B cell (primary cell): ENCODE measurements at regions of chr1 and their contacts with region 1.

Region 1: DNA sequence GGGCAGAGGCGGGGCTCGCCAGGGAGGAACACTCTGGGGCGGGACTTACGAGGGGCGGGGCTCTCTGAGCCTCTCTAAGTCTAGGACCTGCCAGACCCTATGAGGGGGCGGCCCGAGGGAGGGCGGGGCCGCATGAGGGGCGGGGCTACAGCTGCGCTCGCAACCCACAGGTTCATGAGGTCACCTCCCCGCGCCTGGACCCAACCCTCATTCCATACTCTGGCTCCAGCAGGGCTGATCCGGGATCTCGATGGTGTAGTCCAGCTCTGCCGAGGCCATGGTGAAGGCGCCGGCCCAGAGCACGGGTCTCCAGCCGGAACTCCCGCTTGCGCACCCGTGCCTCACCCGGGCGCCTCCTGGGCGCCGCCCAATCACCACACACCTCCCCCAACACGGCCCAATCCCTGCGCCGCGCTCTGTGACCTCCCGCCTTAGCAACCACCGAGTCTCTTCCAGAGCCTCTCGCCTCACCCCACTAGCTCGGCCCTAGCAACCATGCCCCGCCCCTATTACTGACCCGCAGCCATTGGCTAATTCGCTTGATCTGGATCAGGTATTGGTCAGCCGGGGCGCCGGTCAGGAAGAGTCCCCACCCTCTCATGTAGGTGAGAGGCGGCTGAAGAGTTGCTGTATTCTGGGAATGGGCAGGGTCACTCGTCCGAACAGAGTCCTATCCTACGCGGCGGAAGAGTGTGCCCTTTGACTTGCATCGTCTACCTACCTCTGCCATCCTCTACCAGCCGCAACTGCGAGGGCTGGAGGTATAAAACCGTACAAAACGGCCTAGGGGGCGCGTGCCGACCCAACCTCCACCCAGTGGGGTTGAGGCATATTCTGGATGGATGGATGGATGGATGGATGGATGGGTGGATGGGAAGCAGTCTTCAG is at the starts of genes ARMH1 and TMEM53:
- DNase-seq: peak; percentile 99
- ATAC-seq: peak; percentile 91
- H3K4me3 ChIP-seq: peak within 1 kb of the TSS; percentile 70 to 88 (median 84)
- H3K4me3 Mint-ChIP-seq: peak within 1 kb of the TSS; percentile 91
- H3K27ac ChIP-seq: peak within 1 kb of the TSS; percentile 87 to 94
- H3K27ac Mint-ChIP-seq: peak within 1 kb of the TSS; percentile 96
- H3K4me1 ChIP-seq: peaks cover 34 to 50% of the 10 kb centered on the region in 2 donors
- H3K4me1 Mint-ChIP-seq: peaks cover 35% of the 10 kb centered on the region
- H3K27me3 ChIP-seq: no peaks in the 10 kb centered on the region
- H3K27me3 Mint-ChIP-seq: no peaks in the 10 kb centered on the region
- CTCF ChIP-seq: no peak
- total RNA-seq, gene ARMH1: 10.2 and 11.4 TPM in 2 replicates
- total RNA-seq, gene TMEM53: 5.3 and 6.8 TPM in 2 replicates

Region 2: GRCh38 chr1:44213222-44214112 is 460.9 kb before region 1 on chr1 and contains the start of gene DMAP1:
- CTCF ChIA-PET with region 1: no interaction called
- POLR2A ChIA-PET with region 1: no interaction called
- intact Hi-C with region 1: loop called (anchors 1 kb)
- DNase-seq: peak; percentile 92
- ATAC-seq: peak; percentile 81
- H3K4me3 ChIP-seq: peak within 1 kb of the TSS; percentile 77 to 95 (median 84)
- H3K4me3 Mint-ChIP-seq: peak within 1 kb of the TSS; percentile 97
- H3K27ac ChIP-seq: peak within 1 kb of the TSS; percentile 45 to 53
- H3K27ac Mint-ChIP-seq: peak within 1 kb of the TSS; percentile 93
- H3K4me1 ChIP-seq: peaks cover 16 to 17% of the 10 kb centered on the region in 2 donors
- H3K4me1 Mint-ChIP-seq: peaks cover 32% of the 10 kb centered on the region
- H3K27me3 ChIP-seq: no peaks in the 10 kb centered on the region
- H3K27me3 Mint-ChIP-seq: no peaks in the 10 kb centered on the region
- CTCF ChIP-seq: no peak
- total RNA-seq, gene DMAP1: 88.5 and 95.5 TPM in 2 replicates

Region 3: DNA sequence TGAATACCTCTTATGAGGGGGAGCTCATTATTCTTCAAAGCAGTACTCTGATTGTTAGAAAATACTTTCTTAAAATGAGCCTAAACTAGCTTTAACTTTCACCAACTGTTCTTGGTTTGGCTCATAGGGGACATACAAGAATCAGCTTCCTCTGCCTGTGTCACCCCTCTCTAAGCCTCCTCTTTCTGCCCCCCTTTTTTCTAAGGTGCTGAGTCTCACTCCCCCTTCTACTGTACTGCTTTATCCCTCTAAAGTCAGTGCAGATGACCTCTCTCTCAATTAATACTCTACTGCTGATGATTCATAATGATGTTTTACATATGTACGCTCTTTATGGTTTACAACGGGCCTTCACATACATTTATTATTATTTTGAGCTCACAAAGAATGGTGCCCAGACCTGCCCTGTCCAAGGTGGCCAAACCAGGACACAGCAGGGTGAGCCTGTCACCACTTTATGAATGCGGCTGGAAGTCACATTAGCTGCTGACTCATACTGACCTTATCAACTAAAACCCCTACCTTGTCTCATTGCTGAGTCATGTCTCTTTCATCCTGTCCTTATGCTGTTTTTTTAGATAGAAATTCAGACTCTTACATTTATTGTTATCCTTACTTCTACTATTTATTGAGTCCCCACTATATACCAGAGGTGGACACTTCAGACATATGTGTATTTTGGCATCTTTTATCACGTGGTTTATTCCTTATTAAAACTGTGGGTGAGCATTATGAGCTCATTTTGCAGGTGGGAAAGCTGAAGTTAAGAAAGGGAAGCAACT is 142.4 kb before region 1 on chr1:
- CTCF ChIA-PET with region 1: no interaction called
- POLR2A ChIA-PET with region 1: no interaction called
- intact Hi-C with region 1: no loop called
- DNase-seq: no peak
- ATAC-seq: no peak
- H3K4me3 ChIP-seq: no peak overlapping the region
- H3K4me3 Mint-ChIP-seq: no peak overlapping the region
- H3K27ac ChIP-seq: no peak overlapping the region
- H3K27ac Mint-ChIP-seq: no peak overlapping the region
- H3K4me1 ChIP-seq: no peaks in the 10 kb centered on the region
- H3K4me1 Mint-ChIP-seq: no peaks in the 10 kb centered on the region
- H3K27me3 ChIP-seq: no peaks in the 10 kb centered on the region
- H3K27me3 Mint-ChIP-seq: peaks cover 19% of the 10 kb centered on the region
- CTCF ChIP-seq: no peak

Region 4: DNA sequence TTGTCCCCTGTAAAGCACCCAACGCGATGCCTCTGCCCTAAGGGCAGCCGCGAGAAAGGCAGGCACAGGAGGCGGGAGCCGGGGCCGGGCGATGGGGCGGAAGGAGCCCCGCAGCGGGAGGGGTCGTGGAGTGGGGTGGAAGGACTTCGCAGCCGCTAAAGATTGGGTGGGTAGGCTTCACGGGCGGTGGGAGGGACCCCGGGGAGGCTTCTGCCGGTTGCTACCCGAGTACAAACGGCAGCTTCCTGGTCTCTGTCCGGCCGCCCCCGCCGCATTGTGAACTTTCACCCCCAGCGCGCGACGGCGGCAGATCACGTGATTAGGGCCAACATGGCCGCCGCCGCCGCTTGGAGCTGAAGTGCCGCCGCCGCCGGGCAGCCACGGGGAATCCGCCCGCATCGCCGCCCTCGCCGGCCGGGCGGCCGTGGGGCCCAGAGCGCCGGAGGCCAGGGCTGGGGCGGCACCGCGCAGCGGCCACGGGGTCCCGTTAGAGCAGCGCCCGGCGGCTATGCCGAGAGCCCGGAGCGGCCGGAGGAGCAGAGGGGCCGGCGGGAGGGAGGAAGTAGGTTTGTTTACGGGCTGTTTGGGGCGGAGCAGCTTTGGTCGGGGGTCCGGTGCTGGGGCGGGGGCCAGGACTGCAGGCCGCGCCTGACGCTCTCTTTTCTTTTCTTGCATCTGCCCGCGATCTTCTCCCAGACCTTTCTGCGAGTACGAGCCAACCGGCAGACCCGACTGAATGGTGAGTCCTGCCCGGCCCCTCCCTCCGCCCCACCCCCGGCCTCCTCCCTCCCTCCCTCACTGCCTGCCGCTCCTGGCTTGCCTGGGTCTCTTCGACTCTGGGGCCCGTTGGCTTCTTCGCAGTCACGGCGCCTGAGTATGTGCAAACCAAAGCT is 42.5 kb before region 1 on chr1:
- CTCF ChIA-PET with region 1: interaction called, 12 read pairs
- POLR2A ChIA-PET with region 1: interaction called, 16 read pairs
- intact Hi-C with region 1: loop called (anchors 1 kb)
- DNase-seq: peak; percentile 93
- ATAC-seq: peak; percentile 76
- H3K4me3 ChIP-seq: peak overlapping the region; percentile 53 to 76 (median 69)
- H3K4me3 Mint-ChIP-seq: peak overlapping the region; percentile 96
- H3K27ac ChIP-seq: peak overlapping the region; percentile 89 to 91
- H3K27ac Mint-ChIP-seq: peak overlapping the region; percentile 99
- H3K4me1 ChIP-seq: peaks cover 18 to 23% of the 10 kb centered on the region in 2 donors
- H3K4me1 Mint-ChIP-seq: peaks cover 44% of the 10 kb centered on the region
- H3K27me3 ChIP-seq: no peaks in the 10 kb centered on the region
- H3K27me3 Mint-ChIP-seq: no peaks in the 10 kb centered on the region
- CTCF ChIP-seq: no peak

Region 5: GRCh38 chr1:44696789-44697345 is 22.5 kb after region 1 on chr1:
- CTCF ChIA-PET with region 1: interaction called, 21 read pairs
- POLR2A ChIA-PET with region 1: interaction called, 4 read pairs
- intact Hi-C with region 1: loop called (anchors 1 kb)
- DNase-seq: peak; percentile 64
- ATAC-seq: peak; percentile 60
- H3K4me3 ChIP-seq: peak overlapping the region in 1 of 5 experiments; percentile 15
- H3K4me3 Mint-ChIP-seq: peak overlapping the region; percentile 62
- H3K27ac ChIP-seq: peak overlapping the region in 1 of 2 donors; percentile 67
- H3K27ac Mint-ChIP-seq: peak overlapping the region; percentile 89
- H3K4me1 ChIP-seq: peaks cover 44% of the 10 kb centered on the region in 2 donors
- H3K4me1 Mint-ChIP-seq: peaks cover 45% of the 10 kb centered on the region
- H3K27me3 ChIP-seq: no peaks in the 10 kb centered on the region
- H3K27me3 Mint-ChIP-seq: no peaks in the 10 kb centered on the region
- CTCF ChIP-seq: no peak

Region 6: DNA sequence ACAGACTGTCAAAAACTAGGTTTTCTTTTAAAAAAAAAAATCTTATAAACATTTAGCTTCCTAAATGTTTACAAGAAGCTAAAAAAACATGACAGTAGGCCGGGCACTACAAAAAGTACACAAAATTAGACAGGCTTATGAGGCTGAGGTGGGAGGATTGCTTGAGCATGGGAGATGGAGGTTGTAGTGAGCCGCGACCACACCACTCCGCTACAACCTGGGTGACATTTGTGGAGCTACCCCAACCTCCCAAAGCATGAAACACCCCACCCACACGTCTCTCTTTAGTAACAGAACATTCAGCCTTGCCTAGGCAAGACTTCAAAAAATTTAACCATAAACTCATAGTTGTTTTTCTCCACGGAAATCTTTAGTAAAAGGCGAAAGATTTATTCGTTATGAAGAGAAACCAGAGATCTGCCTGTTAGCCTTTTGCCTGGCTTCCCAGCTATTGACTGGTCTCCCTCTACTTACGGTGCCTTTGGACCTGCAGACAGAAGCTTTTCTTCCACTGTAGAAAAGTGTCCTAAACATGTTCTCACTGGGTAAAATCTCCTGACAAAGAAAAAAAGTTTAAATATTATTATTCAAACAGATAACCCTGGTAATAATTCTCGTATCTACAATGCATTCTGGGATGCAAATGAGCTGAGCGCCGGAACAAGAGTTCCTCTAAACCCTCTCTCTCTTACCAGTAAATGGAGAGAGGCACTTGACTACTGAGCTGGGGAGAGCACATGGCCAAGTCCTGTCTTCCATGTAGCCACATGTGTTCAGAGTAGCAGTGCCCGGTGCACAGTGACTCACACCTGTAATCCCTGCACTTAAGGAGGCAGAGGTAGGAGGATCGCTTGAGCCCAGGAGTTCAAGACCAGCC is 47.4 kb after region 1 on chr1:
- CTCF ChIA-PET with region 1: interaction called, 3 read pairs
- POLR2A ChIA-PET with region 1: interaction called, 20 read pairs
- intact Hi-C with region 1: loop called (anchors 5 kb)
- DNase-seq: peak; percentile 91
- ATAC-seq: peak; percentile 80
- H3K4me3 ChIP-seq: peak overlapping the region in 3 of 5 experiments; percentile 8 to 21 (median 15)
- H3K4me3 Mint-ChIP-seq: peak overlapping the region; percentile 78
- H3K27ac ChIP-seq: peak overlapping the region; percentile 88 to 93
- H3K27ac Mint-ChIP-seq: peak overlapping the region; percentile 99
- H3K4me1 ChIP-seq: peaks cover 43 to 48% of the 10 kb centered on the region in 2 donors
- H3K4me1 Mint-ChIP-seq: peaks cover 62% of the 10 kb centered on the region
- H3K27me3 ChIP-seq: no peaks in the 10 kb centered on the region
- H3K27me3 Mint-ChIP-seq: no peaks in the 10 kb centered on the region
- CTCF ChIP-seq: no peak

Region 7: DNA sequence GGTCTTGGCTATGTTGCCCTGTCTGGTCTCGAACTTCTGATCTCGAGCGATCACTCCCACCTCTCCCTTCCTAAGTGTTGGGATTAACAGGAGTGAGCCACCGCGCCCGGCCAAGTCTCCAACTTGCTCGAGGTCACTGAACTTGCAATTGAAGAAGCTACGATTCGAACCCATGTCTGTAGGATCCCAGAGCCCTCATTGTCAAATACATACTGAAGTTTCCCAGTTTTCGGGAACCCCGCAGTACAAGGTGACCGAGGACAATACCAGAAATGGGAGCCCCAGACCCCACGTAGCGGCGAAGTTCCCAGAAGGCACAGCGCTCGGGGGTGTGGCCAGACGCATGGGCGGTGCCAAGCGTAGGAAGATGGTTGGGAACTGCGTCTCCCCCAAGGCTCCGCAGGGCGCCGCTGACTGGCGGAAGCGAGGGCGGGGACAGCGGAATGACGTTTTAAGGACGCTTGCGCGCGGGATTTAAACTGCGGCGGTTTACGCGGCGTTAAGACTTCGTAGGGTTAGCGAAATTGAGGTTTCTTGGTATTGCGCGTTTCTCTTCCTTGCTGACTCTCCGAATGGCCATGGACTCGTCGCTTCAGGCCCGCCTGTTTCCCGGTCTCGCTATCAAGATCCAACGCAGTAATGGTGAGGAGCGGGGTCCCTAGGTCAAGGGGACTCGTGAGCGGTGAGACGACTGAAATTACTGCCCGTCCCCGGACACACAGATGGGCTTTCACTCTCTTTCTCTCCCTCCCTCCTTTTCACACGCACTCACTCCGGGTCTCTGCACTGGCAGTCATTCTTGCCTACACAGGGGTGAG is 65.2 kb after region 1 on chr1 and contains the start of gene KIF2C:
- CTCF ChIA-PET with region 1: no interaction called
- POLR2A ChIA-PET with region 1: no interaction called
- intact Hi-C with region 1: loop called (anchors 1 kb)
- DNase-seq: peak; percentile 97
- ATAC-seq: peak; percentile 100
- H3K4me3 ChIP-seq: peak within 1 kb of the TSS; percentile 54 to 90 (median 87)
- H3K4me3 Mint-ChIP-seq: peak within 1 kb of the TSS; percentile 95
- H3K27ac ChIP-seq: peak within 1 kb of the TSS; percentile 60 to 85
- H3K27ac Mint-ChIP-seq: peak within 1 kb of the TSS; percentile 93
- H3K4me1 ChIP-seq: peaks cover 7 to 12% of the 10 kb centered on the region in 2 donors
- H3K4me1 Mint-ChIP-seq: peaks cover 17% of the 10 kb centered on the region
- H3K27me3 ChIP-seq: no peaks in the 10 kb centered on the region
- H3K27me3 Mint-ChIP-seq: no peaks in the 10 kb centered on the region
- CTCF ChIP-seq: no peak
- total RNA-seq, gene KIF2C: 0.25 and 0.51 TPM in 2 replicates

Region 8: DNA sequence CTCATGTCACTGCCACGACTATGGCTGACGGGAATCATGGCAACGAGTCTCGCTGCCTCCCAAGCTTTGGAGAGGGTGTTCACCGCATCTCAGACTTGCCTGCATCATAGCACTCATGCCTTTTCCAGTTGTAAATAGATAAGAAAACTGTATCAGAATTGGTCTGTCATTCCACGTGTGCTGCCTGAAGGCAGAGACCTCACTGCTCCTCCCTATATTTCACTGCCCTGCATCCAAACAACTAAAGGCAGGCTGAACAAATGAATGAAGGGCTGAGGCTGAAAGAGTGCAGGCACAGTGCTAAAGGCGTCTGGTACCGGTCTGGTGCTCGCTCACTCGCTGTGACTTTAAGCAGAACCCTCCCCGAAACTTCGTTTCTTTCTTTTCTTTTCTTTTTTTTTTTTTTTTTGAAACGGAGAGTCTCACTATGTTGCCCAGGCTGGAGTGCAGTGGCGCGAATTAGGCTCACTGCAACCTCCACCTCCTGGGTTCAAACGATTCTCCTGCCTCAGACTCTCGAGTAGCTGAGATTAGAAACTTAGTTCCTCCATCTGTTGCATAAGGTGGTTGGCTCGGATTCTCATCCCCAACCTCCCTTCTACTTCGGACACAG is 311.5 kb after region 1 on chr1:
- CTCF ChIA-PET with region 1: no interaction called
- POLR2A ChIA-PET with region 1: no interaction called
- intact Hi-C with region 1: loop called (anchors 1 kb)
- DNase-seq: no peak
- ATAC-seq: no peak
- H3K4me3 ChIP-seq: peak overlapping the region; percentile 80 to 91 (median 87)
- H3K4me3 Mint-ChIP-seq: peak overlapping the region; percentile 100
- H3K27ac ChIP-seq: peak overlapping the region; percentile 34 to 66
- H3K27ac Mint-ChIP-seq: peak overlapping the region; percentile 86
- H3K4me1 ChIP-seq: peaks cover 9 to 19% of the 10 kb centered on the region in 2 donors
- H3K4me1 Mint-ChIP-seq: peaks cover 18% of the 10 kb centered on the region
- H3K27me3 ChIP-seq: no peaks in the 10 kb centered on the region
- H3K27me3 Mint-ChIP-seq: no peaks in the 10 kb centered on the region
- CTCF ChIP-seq: no peak